Psoas muscle (tissue), 8 donors: ENCODE measurements at regions of chr16 and their contacts with region 1.

Region 1: DNA sequence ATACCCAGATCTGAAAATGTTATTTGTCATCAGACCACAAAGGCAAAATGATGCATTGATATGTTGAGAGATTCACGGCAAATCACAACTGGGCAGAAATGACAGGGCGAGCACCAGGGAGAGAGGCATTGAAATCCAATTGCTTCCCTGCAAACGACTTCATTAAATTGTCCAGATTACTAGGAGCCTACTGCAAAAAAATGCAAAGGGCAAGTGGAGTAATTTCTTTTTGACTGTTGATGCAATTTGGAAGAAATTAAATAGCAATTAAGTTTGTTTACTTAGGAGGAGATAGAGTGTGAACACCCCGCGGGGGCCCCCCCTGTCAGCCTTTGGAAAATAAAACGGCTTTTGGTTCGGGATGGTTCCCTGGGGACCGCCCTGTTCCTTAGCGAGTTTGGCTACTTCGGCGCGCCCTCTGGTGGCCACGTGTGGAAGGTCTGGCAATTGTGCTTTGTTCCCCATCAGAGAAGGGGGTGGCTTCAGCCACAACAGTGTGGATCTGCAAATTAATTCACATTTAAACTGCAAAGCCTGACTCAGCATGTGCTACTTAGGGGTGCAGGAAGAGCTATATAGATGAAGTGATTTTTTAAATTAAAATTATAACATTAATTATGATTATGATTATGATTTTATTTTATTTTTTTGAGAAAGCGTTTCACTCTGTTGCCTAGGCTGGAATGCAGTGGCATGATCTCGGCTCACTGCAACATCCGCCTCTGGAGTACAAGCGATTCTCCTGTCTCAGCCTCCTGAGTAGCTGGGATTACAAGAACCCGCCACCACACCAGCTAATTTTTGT is 14.5 kb upstream of the TMC7 start:
- DNase-seq: peak; percentile 88 to 94
- ATAC-seq: peak; percentile 86 to 95 (median 90)
- H3K4me3 ChIP-seq: peak overlapping the region; percentile 57
- H3K27ac ChIP-seq: no peak overlapping the region
- H3K4me1 ChIP-seq: peaks cover 8% of the 10 kb centered on the region
- H3K27me3 ChIP-seq: no peaks in the 10 kb centered on the region
- CTCF ChIP-seq: peak; percentile 96

Region 2: GRCh38 chr16:18789850-18790724 is 179.2 kb before region 1 on chr16 and contains the start of gene RPS15A:
- intact Hi-C with region 1: loop called in 1 of 2 experiments (anchors 5 kb)
- DNase-seq: peak; percentile 92 to 96
- ATAC-seq: peak; percentile 94 to 98 (median 96)
- H3K4me3 ChIP-seq: peak within 1 kb of the TSS; percentile 94
- H3K27ac ChIP-seq: peak within 1 kb of the TSS; percentile 93
- H3K4me1 ChIP-seq: peaks cover 36% of the 10 kb centered on the region
- H3K27me3 ChIP-seq: no peaks in the 10 kb centered on the region
- CTCF ChIP-seq: no peak
- total RNA-seq, gene RPS15A: 822 to 1,272 (median 1,015) TPM

Region 3: GRCh38 chr16:18801197-18801972 is 167.9 kb before region 1 on chr16 and contains the start of gene ARL6IP1:
- intact Hi-C with region 1: loop called (anchors 5 to 10 kb)
- DNase-seq: peak; percentile 99 to 100
- ATAC-seq: peak; percentile 92 to 98 (median 95)
- H3K4me3 ChIP-seq: peak within 1 kb of the TSS; percentile 77
- H3K27ac ChIP-seq: peak within 1 kb of the TSS; percentile 82
- H3K4me1 ChIP-seq: peaks cover 48% of the 10 kb centered on the region
- H3K27me3 ChIP-seq: no peaks in the 10 kb centered on the region
- CTCF ChIP-seq: peak; percentile 90
- total RNA-seq, gene ARL6IP1: 13.2 to 24.6 (median 15.1) TPM

Region 4: DNA sequence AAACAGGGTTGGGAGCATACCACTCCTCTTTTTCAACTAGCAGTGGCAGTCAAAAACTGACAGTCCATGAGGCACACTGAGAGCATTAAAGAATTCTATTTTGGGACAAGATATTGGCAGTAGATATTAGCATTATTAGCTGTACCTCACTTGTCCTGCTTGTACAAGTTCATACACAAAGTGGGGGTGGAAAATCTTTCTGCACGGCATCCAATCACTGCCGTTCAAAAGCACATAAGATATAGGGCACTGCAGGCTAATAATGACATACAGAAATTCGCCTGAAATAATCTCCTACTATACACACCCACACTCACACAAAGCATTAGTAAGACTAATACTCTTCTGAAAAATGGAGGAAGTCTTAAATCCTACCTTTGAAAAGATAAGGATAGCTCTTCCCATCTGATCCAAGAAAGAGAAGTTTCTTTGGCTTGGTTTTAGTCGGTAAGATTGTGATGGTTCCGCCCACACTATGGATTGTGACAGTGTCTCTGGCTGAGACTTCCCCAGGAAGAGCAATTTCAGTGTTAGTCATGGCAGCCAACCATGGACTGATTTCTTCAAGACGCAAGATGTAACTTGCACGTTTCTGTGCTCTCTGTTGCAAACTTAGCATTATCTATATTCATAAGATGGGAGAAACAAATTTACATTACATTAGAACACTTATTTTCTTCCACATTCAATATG is 127.3 kb before region 1 on chr16:
- intact Hi-C with region 1: loop called in 1 of 2 experiments (anchors 10 kb)
- DNase-seq: no peak
- ATAC-seq: no peak
- H3K4me3 ChIP-seq: no peak overlapping the region
- H3K27ac ChIP-seq: no peak overlapping the region
- H3K4me1 ChIP-seq: peaks cover 4% of the 10 kb centered on the region
- H3K27me3 ChIP-seq: no peaks in the 10 kb centered on the region
- CTCF ChIP-seq: no peak